Activated CD4-positive, alpha-beta memory T cell treated with anti-CD3 and anti-CD28 coated beads for 36 hours (primary cell): ENCODE measurements at regions of chr16 and their contacts with region 1.

Region 1: GRCh38 chr16:85986931-85987749 is 88.2 kb downstream of the IRF8 start:
- DNase-seq: peak; percentile 50
- H3K4me3 Mint-ChIP-seq: no peak overlapping the region
- H3K27ac Mint-ChIP-seq: no peak overlapping the region
- H3K4me1 Mint-ChIP-seq: peaks cover 60% of the 10 kb centered on the region
- H3K27me3 Mint-ChIP-seq: peaks cover 12% of the 10 kb centered on the region

Region 2: DNA sequence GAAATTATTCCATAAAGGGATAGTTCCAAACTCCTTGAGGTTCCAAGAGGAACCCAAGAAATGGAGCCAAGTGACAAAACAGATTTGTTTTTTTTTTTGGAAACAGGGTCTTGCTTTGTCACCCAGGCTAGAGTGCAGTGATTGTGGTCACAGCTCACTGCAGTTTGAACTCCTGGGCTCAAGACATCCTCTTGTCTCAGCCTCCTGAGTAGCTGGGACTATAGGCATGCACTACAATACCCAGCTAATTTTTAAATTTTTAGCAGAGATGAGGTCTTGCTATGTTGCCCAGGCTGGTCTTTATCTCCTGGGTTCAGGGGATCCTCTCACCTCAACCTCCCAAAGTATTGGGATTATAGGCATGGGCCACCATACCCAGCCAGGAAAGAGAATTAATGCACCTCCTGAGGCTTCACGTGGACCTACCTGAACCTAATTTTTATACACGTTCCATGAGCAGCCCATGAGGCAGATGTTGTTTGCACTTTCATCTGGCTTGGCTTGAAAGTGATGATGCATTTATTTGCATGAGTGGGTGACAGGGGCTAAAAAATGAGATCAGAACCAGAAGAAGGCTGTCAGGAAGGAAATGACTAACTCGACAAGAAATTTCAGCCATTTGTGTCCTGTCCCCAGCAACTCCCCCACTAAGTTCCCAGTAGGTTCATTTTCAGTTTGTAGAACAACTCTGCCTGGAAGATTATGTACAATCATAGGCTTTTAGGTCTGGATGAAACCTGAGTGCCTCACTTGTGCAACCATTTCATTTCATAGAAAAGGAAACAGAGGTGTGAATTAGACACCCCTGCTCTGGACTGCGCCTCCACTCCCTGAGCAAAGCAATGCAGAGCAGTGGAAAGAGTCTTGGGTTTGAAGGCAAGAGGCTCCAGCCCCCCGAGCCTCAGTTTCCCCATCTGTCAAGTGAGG is 98.5 kb before region 1 on chr16:
- CTCF ChIA-PET with region 1: no interaction called
- POLR2A ChIA-PET with region 1: interaction called, 3 read pairs
- intact Hi-C with region 1: loop called (anchors 1 kb)
- DNase-seq: peak; percentile 57
- H3K4me3 Mint-ChIP-seq: no peak overlapping the region
- H3K27ac Mint-ChIP-seq: peak overlapping the region; percentile 52
- H3K4me1 Mint-ChIP-seq: peaks cover 27% of the 10 kb centered on the region
- H3K27me3 Mint-ChIP-seq: peaks cover 29% of the 10 kb centered on the region

Region 3: DNA sequence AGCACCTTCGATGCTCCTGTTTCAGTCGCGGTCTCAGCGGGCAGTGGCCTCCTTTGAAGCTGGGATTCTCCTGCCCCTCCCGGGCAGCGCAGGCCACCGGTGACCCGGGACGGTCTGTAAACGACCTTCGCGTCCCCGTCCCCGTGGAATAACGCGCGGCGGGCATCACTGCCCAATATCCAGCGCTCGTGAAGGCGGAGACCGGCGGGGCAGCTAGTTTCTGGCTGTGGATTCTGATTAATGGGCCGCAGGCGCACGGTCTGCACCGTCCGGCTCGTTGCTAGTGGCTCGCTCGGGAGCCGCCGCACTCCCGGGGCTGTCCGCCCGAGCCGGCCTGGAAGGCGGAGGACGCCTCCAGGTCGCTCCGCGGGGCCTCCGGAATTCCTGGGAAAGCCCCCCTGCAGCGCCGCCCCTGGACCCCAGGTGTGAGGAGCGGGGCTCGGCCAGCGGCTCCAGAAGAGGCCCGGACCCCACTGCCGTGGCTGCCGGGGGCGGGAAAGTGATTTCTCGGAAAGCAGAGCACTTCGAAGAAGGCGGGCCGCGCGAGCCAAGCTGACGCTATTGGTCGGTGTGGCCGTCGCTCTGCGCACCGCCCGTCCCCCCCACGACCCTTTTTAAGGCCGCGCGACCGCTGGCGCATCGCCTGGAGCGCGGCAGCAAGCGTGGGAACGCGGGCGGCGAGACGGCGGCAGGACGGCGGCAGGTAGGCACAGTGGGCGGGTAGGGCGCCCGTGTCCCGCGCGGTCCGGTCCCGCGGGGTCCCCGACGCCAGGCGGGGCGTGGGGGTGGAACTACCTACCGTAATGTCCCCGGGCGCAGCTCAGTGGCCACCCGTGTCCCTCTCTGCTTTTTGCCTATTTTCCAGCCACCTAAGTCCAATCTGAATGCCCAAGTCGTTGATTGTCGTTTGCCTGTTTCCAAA is 88.4 kb before region 1 on chr16 and contains the start of gene IRF8:
- CTCF ChIA-PET with region 1: interaction called, 28 read pairs
- POLR2A ChIA-PET with region 1: interaction called, 3 read pairs
- intact Hi-C with region 1: loop called (anchors 2 kb)
- DNase-seq: peak; percentile 80
- H3K4me3 Mint-ChIP-seq: peak within 1 kb of the TSS; percentile 82
- H3K27ac Mint-ChIP-seq: peak within 1 kb of the TSS; percentile 76
- H3K4me1 Mint-ChIP-seq: peaks cover 40% of the 10 kb centered on the region
- H3K27me3 Mint-ChIP-seq: peaks cover 28% of the 10 kb centered on the region
- total RNA-seq, gene IRF8: 41.7 to 43.1 TPM

Region 4: GRCh38 chr16:85935974-85936760 is 51.0 kb before region 1 on chr16:
- CTCF ChIA-PET with region 1: interaction called, 20 read pairs
- POLR2A ChIA-PET with region 1: interaction called, 5 read pairs
- intact Hi-C with region 1: loop called (anchors 1 kb)
- DNase-seq: peak; percentile 88
- H3K4me3 Mint-ChIP-seq: peak overlapping the region; percentile 42
- H3K27ac Mint-ChIP-seq: peak overlapping the region; percentile 95
- H3K4me1 Mint-ChIP-seq: peaks cover 48% of the 10 kb centered on the region
- H3K27me3 Mint-ChIP-seq: peaks cover 7% of the 10 kb centered on the region

Region 5: DNA sequence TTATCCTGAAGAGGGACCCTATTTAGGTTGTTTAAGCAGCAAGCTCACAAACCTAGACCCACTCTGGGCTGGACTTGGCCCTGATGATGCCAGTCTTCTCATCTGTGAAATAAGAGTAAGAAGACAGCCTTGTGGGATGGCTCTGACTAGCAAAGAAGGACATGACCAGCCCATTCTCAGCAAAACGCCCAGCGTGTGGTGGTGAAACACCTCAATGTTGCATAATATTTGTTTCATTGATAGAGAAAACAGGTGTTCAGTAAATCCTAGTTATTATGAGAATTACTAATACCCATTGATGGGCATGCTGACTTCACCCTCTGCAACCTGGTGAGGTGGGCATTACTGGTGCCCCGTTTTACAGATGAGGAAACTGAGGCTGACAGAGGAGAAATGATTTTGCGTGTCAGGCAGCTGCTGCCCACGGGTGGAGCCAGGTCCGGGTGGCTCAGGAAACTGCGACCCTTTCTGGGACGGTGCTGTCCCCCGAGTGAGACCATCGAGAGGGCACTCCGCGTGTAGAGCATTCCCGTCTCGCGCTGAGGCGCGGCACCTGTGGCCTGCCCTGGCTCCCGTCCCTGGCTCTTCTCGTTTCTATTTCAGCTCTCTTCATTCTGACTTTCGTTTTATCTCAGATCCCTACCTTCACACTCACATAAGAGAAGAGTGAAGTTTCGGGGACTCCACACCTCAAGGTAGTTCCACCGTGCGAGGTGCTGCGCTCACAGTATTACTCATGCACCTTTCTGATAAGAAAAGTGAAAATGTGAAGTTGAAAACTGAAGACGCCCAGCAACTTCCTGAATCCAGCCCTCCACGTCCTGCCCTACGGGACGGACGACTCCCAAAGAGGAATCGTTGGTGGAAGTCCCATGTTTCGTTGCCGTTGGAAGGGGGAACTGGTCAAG is 39.7 kb before region 1 on chr16:
- CTCF ChIA-PET with region 1: interaction called, 3 read pairs
- POLR2A ChIA-PET with region 1: interaction called, 4 read pairs
- intact Hi-C with region 1: loop called (anchors 2 kb)
- DNase-seq: peak; percentile 77
- H3K4me3 Mint-ChIP-seq: peak overlapping the region; percentile 45
- H3K27ac Mint-ChIP-seq: peak overlapping the region; percentile 54
- H3K4me1 Mint-ChIP-seq: peaks cover 49% of the 10 kb centered on the region
- H3K27me3 Mint-ChIP-seq: peaks cover 32% of the 10 kb centered on the region

Region 6: GRCh38 chr16:86010680-86011141 is 23.6 kb after region 1 on chr16:
- CTCF ChIA-PET with region 1: interaction called, 20 read pairs
- POLR2A ChIA-PET with region 1: interaction called, 3 read pairs
- intact Hi-C with region 1: loop called (anchors 2 kb)
- DNase-seq: no peak
- H3K4me3 Mint-ChIP-seq: no peak overlapping the region
- H3K27ac Mint-ChIP-seq: no peak overlapping the region
- H3K4me1 Mint-ChIP-seq: peaks cover 16% of the 10 kb centered on the region
- H3K27me3 Mint-ChIP-seq: peaks cover 2% of the 10 kb centered on the region

Region 7: DNA sequence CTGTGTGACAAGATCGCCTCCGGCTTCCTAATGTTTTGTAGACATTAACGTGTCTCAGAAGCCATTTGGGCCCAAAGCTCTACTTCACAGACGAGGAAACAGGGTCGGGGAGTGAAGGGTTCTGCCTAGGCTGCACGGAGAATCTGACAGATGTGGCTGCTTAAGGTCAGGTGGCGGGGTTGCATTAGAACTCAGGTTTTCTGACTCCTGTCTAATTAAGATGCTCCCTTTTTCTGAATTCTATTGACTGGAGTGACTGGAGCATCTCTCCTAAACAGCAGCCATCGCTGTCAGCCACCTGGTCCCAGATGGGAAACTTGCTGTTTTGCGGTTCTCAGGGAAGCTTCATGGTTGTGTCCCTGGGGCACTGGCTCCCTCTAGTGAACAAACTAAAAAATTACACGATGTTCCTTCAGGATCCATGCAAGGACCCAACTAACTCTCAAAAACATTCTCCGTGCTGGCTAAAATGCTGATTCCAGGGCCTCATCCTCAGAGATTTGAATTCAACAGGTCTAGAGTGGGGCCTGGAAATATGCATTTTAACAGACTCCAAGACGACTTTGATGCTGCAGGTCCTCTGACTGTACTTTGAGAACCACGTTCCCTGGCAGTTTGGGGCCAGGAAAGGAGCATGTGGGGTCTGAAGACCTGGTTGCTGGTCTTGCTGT is 29.2 kb after region 1 on chr16:
- CTCF ChIA-PET with region 1: interaction called, 20 read pairs
- POLR2A ChIA-PET with region 1: no interaction called
- intact Hi-C with region 1: no loop called
- DNase-seq: peak; percentile 47
- H3K4me3 Mint-ChIP-seq: no peak overlapping the region
- H3K27ac Mint-ChIP-seq: no peak overlapping the region
- H3K4me1 Mint-ChIP-seq: no peaks in the 10 kb centered on the region
- H3K27me3 Mint-ChIP-seq: peaks cover 34% of the 10 kb centered on the region